Activated CD4-positive, alpha-beta T cell treated with anti-CD3 and anti-CD28 coated beads, Interleukin-2, amount 10 ng/mL, durations not matched to agents 24 days and 14 days (primary cell): ENCODE measurements at regions of chr22 and their contacts with region 1.

Region 1: DNA sequence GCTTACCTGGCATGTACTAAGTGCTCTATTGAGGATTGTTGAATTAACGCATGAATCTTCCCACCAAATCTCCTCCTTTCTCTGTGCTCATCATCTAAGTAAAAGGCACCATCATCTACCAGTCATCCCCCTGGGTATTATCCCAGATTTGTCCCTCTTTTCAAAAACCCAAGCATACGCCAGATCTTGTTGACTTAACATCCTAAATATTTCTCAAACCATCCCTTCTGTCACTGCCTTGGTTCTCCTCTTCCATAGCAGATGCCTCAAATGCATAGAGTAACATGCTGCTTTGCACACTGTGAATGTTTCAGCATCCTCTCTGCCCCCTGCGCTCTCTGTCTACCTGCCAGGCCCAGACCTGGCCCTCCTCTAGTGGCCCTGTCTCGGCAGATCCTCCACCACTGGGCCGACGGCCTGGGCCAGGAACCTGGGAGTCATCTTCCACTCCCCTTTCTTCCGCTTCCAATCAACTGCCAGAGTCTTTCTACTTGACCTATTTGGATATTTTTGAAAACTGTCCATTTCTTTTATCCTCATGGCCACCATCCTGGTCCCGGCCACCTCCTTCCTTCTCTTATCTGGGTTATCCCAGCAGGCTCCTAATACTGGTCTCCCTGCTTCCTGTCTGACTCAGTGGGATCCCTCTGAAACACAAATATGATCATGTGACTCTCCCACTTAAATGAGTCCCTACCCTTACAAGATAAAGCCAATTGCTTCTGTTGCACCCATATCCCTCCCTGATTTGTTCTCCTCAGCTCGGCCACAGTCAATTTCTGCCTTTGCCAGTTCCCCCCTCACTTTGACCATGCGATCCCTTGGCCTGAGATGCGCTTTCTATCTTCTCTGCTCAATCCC is 3.4 kb upstream of the TAB1 start:
- DNase-seq: no peak
- H3K4me3 Mint-ChIP-seq: no peak overlapping the region
- H3K27ac Mint-ChIP-seq: no peak overlapping the region
- H3K4me1 Mint-ChIP-seq: peaks cover 8% of the 10 kb centered on the region
- H3K27me3 Mint-ChIP-seq: no peaks in the 10 kb centered on the region

Region 2: DNA sequence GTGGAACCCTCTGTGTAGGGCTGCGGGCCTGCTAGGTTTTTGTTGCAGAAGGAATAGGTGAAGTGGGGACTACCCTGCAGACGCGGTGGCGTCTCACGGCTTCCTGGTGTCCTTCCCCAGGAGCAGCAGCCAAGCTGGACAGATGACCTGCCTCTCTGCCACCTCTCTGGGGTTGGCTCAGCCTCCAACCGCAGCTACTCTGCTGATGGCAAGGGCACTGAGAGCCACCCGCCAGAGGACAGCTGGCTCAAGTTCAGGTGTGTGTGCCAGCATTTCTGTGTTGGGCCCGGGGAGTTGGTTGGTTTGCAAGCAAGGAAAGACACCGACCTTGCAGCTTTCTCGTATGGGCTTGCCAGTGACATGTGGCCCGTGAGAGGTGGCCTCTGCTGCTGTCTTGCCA is 18.7 kb after region 1 on chr22:
- intact Hi-C with region 1: loop called (anchors 1 kb)
- DNase-seq: no peak
- H3K4me3 Mint-ChIP-seq: no peak overlapping the region
- H3K27ac Mint-ChIP-seq: no peak overlapping the region
- H3K4me1 Mint-ChIP-seq: peaks cover 34% of the 10 kb centered on the region
- H3K27me3 Mint-ChIP-seq: no peaks in the 10 kb centered on the region

Region 3: DNA sequence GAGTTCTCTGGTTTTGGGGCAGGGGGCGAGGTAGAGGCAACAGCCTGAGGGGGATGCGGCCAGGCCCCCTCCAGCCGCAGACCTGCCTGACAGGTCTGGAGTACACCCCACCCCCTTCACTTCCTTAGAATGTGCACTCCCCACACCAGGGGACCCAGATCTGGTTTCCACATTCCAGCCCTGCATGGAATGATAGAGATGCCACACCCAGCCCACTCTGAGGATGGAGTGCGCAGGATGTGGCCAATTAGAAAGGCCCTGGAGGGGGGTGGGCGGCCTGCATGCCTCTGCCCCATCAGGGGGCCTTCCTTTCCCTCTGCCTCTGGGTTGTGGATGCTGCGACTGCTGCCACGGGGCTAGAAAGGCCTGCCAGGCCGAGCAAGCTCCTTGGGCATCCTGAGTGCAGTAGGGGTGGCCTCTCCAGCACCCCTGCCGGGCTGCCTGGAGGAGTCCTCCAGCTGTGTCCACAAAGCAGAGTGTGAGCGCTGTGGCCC is 32.5 kb after region 1 on chr22:
- intact Hi-C with region 1: no loop called
- DNase-seq: no peak
- H3K4me3 Mint-ChIP-seq: no peak overlapping the region
- H3K27ac Mint-ChIP-seq: no peak overlapping the region
- H3K4me1 Mint-ChIP-seq: no peaks in the 10 kb centered on the region
- H3K27me3 Mint-ChIP-seq: no peaks in the 10 kb centered on the region

Region 4: GRCh38 chr22:39490135-39490798 is 94.1 kb after region 1 on chr22:
- intact Hi-C with region 1: loop called (anchors 5 kb)
- DNase-seq: peak; percentile 93
- H3K4me3 Mint-ChIP-seq: no peak overlapping the region
- H3K27ac Mint-ChIP-seq: no peak overlapping the region
- H3K4me1 Mint-ChIP-seq: peaks cover 15% of the 10 kb centered on the region
- H3K27me3 Mint-ChIP-seq: no peaks in the 10 kb centered on the region

Region 5: DNA sequence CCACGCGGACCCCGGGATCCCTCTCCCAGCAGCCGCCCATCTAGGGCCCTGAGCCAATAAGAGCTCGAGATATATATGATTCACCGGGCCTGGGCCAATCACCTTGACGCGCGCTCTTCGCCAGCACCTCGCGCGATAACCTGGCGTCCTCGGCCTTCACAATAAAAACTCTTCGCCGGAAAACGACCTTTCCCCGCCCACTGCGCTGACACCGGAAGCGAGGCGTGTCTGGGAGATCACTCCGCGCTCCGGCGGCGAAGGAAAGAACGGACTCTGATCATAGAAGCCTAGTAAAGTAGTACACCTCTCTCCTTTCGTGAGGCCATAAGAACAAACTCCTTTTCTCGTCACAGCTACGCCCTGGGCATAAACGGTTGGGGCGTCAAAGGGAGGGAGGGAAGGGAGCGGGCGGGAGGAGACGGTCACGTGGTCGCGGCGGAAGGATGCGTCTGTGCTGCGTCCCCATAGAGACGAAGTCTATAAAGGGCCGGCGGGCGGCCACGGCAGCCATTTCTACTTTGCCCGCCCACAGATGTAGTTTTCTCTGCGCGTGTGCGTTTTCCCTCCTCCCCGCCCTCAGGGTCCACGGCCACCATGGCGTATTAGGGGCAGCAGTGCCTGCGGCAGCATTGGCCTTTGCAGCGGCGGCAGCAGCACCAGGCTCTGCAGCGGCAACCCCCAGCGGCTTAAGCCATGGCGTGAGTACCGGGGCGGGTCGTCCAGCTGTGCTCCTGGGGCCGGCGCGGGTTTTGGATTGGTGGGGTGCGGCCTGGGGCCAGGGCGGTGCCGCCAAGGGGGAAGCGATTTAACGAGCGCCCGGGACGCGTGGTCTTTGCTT is 124.1 kb after region 1 on chr22 and contains the start of gene ATF4:
- intact Hi-C with region 1: loop called (anchors 2 kb)
- DNase-seq: peak; percentile 99
- H3K4me3 Mint-ChIP-seq: peak within 1 kb of the TSS; percentile 93
- H3K27ac Mint-ChIP-seq: peak within 1 kb of the TSS; percentile 98
- H3K4me1 Mint-ChIP-seq: peaks cover 50% of the 10 kb centered on the region
- H3K27me3 Mint-ChIP-seq: peaks cover 2% of the 10 kb centered on the region
- total RNA-seq, gene ATF4: 392 and 393 TPM in 2 replicates